Activated naive CD4-positive, alpha-beta T cell treated with anti-CD3 and anti-CD28 coated beads for 36 hours (primary cell): ENCODE measurements at regions of chr14 and their contacts with region 1.

Region 1: GRCh38 chr14:35416108-35416750 is 11.7 kb upstream of the NFKBIA start:
- DNase-seq: peak; percentile 89
- H3K4me3 Mint-ChIP-seq: peak overlapping the region; percentile 59
- H3K27ac Mint-ChIP-seq: peak overlapping the region; percentile 91
- H3K4me1 Mint-ChIP-seq: peaks cover 47% of the 10 kb centered on the region
- H3K27me3 Mint-ChIP-seq: no peaks in the 10 kb centered on the region

Region 2: DNA sequence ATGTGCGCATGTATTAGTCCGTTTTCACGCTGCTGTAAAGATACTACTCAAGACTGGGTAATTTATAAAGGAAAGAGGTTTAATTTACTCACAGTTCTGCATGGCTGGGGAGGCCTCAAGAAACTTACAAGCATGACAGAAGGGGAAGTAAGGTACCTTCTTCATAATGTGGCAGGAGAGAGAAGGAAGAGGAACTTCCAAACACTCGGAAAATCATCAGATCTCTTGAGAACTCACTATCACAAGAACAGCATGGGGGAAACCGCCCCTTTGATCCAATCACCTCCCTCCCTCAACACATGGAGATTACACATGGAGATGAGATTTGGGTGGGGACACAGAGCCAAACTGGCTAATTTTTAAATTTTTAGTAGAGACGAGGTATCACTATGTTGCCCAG is 744.5 kb before region 1 on chr14:
- CTCF ChIA-PET with region 1: interaction called, 6 read pairs
- intact Hi-C with region 1: loop called (anchors 1 kb)
- DNase-seq: no peak
- H3K4me3 Mint-ChIP-seq: no peak overlapping the region
- H3K27ac Mint-ChIP-seq: no peak overlapping the region
- H3K4me1 Mint-ChIP-seq: no peaks in the 10 kb centered on the region
- H3K27me3 Mint-ChIP-seq: no peaks in the 10 kb centered on the region

Region 3: DNA sequence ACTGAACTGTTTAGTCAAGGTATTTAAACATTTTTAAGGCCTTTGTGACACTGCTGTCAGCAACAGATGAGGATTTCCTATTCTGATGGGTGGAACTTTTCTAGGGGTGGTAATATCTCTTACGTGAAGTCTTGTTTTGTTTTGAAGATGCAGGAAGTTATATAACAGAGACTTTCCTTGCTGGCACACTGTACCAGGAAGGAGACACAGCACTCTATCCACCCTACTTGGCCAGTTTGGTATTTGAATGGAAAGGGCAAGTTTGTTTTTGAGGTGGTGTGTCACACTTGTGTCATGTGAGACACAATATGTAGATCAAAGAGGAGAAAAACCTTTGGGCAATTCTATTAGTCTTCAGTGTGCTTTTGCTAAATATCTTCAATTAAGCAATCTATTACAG is 485.0 kb before region 1 on chr14:
- CTCF ChIA-PET with region 1: no interaction called
- intact Hi-C with region 1: loop called (anchors 2 kb)
- DNase-seq: peak; percentile 56
- H3K4me3 Mint-ChIP-seq: peak overlapping the region; percentile 64
- H3K27ac Mint-ChIP-seq: peak overlapping the region; percentile 93
- H3K4me1 Mint-ChIP-seq: peaks cover 49% of the 10 kb centered on the region
- H3K27me3 Mint-ChIP-seq: no peaks in the 10 kb centered on the region

Region 4: GRCh38 chr14:35215110-35215876 is 200.9 kb before region 1 on chr14:
- CTCF ChIA-PET with region 1: interaction called, 5 read pairs
- intact Hi-C with region 1: loop called (anchors 1 kb)
- DNase-seq: no peak
- H3K4me3 Mint-ChIP-seq: no peak overlapping the region
- H3K27ac Mint-ChIP-seq: no peak overlapping the region
- H3K4me1 Mint-ChIP-seq: peaks cover 7% of the 10 kb centered on the region
- H3K27me3 Mint-ChIP-seq: no peaks in the 10 kb centered on the region

Region 5: GRCh38 chr14:35292051-35292769 is 124.0 kb before region 1 on chr14 and contains the start of gene PSMA6:
- CTCF ChIA-PET with region 1: interaction called, 12 read pairs
- intact Hi-C with region 1: loop called (anchors 1 kb)
- DNase-seq: peak; percentile 99
- H3K4me3 Mint-ChIP-seq: peak within 1 kb of the TSS; percentile 98
- H3K27ac Mint-ChIP-seq: peak within 1 kb of the TSS; percentile 97
- H3K4me1 Mint-ChIP-seq: peaks cover 53% of the 10 kb centered on the region
- H3K27me3 Mint-ChIP-seq: no peaks in the 10 kb centered on the region
- total RNA-seq, gene PSMA6: 433 to 437 TPM

Region 6: DNA sequence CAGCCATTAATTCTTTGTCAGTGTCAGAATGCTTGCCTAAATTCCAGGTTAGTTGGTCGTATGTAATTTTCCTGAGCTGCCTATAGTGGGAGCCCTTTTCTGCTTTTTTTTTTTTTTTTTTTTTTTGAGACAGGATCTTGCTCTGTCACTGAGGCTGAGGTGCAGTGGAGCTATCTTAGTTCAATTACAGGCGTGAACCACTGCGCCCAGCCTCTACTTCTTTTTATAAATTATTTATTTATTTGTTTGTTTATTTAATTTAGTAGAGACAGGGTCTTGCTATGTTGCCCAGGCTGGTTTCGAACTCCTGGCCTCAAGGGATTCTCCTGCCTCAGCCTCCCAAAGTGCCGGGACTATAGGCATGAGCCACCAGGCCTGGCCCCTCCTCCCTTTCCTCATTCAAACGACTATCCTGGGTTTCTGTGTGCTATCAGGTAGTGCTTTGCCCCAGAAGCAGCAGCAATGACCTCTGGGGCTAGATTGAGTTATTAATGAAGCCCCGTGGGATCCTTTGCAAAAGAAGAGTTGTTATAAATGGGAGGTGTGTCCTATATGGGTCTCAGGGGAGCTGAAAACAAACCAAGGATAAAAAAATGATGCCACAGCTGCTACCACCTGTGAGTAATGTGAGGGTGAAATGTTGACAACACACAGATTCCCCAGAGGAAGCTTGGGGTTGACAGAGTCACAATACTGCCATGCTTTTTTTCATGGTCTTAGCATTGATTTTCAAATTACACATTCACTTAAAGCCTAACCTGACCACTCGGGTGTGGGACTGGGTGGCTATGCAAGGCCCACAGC is 22.9 kb after region 1 on chr14:
- CTCF ChIA-PET with region 1: interaction called, 10 read pairs
- intact Hi-C with region 1: no loop called
- DNase-seq: no peak
- H3K4me3 Mint-ChIP-seq: no peak overlapping the region
- H3K27ac Mint-ChIP-seq: no peak overlapping the region
- H3K4me1 Mint-ChIP-seq: peaks cover 9% of the 10 kb centered on the region
- H3K27me3 Mint-ChIP-seq: no peaks in the 10 kb centered on the region

Region 7: GRCh38 chr14:35470755-35471154 is 54.5 kb after region 1 on chr14:
- CTCF ChIA-PET with region 1: no interaction called
- intact Hi-C with region 1: no loop called
- DNase-seq: no peak
- H3K4me3 Mint-ChIP-seq: no peak overlapping the region
- H3K27ac Mint-ChIP-seq: no peak overlapping the region
- H3K4me1 Mint-ChIP-seq: no peaks in the 10 kb centered on the region
- H3K27me3 Mint-ChIP-seq: peaks cover 21% of the 10 kb centered on the region